Vagina (tissue), 2 donors: ENCODE measurements at regions of chr11 and their contacts with region 1.

Region 1: GRCh38 chr11:8688414-8689362 is 6.1 kb downstream of the RPL27A start:
- DNase-seq: peak in 1 of 2 donors; percentile 97
- H3K4me3 ChIP-seq: peak overlapping the region; percentile 51 to 57
- H3K27ac ChIP-seq: peak overlapping the region; percentile 66
- H3K4me1 ChIP-seq: peaks cover 30% of the 10 kb centered on the region
- H3K27me3 ChIP-seq: no peaks in the 10 kb centered on the region
- CTCF ChIP-seq: peak in 1 of 3 experiments; percentile 21
- POLR2A ChIP-seq: no peak

Region 2: DNA sequence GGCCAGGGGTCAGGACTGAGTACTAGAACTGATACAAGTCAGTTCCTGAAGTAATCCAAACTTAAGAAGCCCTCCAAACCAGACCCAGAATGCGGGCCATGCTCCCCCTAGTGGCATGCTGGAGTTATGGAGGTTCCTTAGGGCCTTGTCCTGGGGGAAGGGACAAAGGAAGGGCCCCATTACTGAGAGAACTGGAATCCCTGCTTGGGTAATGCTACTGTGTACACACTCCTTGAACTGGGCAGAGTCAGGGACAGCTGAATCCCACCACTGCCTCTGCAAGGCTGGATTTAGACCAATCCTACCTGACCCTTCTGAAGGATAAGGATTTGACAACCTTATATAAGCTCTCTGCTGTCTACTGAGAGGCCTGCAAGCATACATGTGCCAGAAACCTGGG is 125.0 kb after region 1 on chr11:
- intact Hi-C with region 1: loop called (anchors 5 kb)
- DNase-seq: no peak
- H3K4me3 ChIP-seq: no peak overlapping the region
- H3K27ac ChIP-seq: peak overlapping the region; percentile 53
- H3K4me1 ChIP-seq: peaks cover 46% of the 10 kb centered on the region
- H3K27me3 ChIP-seq: no peaks in the 10 kb centered on the region
- CTCF ChIP-seq: peak; percentile 50 to 76 (median 57)
- POLR2A ChIP-seq: no peak

Region 3: DNA sequence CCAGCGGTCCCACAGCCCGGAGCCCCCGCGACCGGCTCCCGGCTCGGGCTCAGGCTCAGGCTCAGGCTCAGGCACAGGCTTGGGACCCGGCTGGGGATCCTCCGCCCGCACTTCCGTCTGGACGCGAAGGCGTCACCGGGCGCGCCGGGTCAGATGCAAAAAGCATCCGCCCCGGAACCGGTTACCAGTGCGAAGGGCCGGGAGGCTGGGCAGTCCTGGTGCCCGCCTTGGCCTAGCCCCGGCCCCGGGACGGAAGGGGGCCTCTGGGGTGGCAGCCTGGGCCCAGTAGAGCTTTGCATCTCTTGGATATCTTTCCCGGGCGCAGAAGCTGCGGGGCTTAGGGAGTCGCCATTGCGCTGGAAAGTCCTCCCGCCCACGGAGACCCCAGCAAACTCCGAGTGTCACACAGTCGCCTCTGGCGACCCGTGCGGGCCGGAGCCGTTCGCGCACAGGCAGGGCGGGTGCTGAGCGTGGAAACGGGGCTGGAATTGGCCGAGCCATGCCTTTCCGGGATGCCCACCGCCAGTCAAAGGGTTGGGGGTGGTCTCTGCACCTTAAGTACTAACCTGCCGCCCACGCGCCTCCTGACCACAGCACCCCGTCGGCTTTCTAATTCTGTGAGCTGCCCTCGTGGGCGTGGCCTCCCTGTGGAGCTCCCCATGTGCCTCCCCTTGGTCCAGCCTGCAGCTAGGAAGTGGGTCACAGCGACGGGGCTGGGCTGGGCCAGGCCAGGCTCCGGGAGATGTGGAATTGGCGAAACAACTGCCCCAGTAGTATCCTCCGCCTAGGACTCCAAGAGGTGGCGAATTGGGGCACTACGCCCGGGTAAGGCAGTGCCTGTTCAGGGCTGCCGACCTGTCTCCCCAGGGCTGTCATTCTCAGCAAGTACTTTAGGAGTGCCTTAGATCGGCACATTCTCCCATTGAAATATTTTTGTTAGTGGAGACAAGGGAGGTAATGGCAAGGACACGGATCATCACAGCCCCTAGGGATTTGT is 275.9 kb after region 1 on chr11 and contains the start of gene TMEM9B:
- intact Hi-C with region 1: loop called (anchors 10 kb)
- DNase-seq: peak in 1 of 2 donors; percentile 94
- H3K4me3 ChIP-seq: peak within 1 kb of the TSS; percentile 89 to 91
- H3K27ac ChIP-seq: peak within 1 kb of the TSS; percentile 93
- H3K4me1 ChIP-seq: peaks cover 25% of the 10 kb centered on the region
- H3K27me3 ChIP-seq: no peaks in the 10 kb centered on the region
- CTCF ChIP-seq: no peak
- POLR2A ChIP-seq: peak in 1 of 2 donors; percentile 83
- total RNA-seq, gene TMEM9B: 26.8 TPM